ENCODE measurements at regions of chr5 and their contacts with region 1.

Region 1: DNA sequence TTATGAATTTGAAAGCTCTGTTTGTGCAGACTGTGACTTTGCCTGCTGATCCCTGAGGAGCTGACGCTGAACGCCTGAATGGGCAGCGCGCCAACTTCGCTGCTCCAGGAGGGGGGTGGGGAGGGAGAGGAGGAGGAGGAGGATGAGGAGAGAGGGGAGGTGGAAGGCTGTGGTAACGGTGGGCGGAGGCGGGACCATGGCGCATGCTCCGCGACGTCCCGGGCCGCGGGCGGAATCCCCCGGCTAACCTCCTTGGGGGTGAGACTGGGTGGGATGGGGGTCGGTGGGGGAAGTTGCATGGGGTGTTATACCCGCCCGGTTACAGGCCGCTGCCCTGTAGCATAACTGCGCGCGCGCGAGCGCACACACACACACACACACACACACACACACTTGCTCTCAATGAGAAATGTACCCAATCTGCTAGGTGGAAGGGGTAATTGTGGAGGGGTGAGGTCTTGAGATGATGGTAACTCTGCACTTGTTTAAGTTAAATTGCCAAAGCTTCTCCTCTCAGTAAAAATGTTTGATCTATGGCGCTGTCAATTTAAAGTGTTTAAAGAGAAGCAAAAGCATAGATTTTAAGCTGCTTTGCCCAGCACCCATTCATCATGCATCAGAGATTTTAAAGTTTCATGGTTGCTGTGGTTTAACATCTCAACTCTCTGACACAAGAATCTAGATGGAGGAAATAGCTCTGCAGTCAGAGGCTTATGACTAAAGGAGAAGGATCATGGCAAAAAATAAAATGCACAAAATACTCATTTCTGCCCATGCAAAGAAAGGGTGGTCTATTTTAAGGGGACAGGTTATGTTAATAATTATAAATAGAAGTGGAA is 76.6 kb upstream of the TBCA start:
- DNase-seq: peak; percentile 34
- H3K4me3 Mint-ChIP-seq: peak overlapping the region; percentile 67
- H3K27ac Mint-ChIP-seq: peak overlapping the region; percentile 38
- H3K4me1 Mint-ChIP-seq: peaks cover 13% of the 10 kb centered on the region
- H3K27me3 Mint-ChIP-seq: peaks cover 38% of the 10 kb centered on the region

Region 2: GRCh38 chr5:77630258-77631089 is 222.3 kb before region 1 on chr5:
- CTCF ChIA-PET with region 1: no interaction called
- POLR2A ChIA-PET with region 1: no interaction called
- intact Hi-C with region 1: loop called (anchors 5 kb)
- DNase-seq: peak; percentile 76
- H3K4me3 Mint-ChIP-seq: peak overlapping the region; percentile 74
- H3K27ac Mint-ChIP-seq: no peak overlapping the region
- H3K4me1 Mint-ChIP-seq: peaks cover 20% of the 10 kb centered on the region
- H3K27me3 Mint-ChIP-seq: peaks cover 67% of the 10 kb centered on the region

Measured in activated CD4-positive, alpha-beta memory T cell treated with anti-CD3 and anti-CD28 coated beads for 36 hours (primary cell).